ENCODE measurements at regions of chr1 and their contacts with region 1.

Region 1: DNA sequence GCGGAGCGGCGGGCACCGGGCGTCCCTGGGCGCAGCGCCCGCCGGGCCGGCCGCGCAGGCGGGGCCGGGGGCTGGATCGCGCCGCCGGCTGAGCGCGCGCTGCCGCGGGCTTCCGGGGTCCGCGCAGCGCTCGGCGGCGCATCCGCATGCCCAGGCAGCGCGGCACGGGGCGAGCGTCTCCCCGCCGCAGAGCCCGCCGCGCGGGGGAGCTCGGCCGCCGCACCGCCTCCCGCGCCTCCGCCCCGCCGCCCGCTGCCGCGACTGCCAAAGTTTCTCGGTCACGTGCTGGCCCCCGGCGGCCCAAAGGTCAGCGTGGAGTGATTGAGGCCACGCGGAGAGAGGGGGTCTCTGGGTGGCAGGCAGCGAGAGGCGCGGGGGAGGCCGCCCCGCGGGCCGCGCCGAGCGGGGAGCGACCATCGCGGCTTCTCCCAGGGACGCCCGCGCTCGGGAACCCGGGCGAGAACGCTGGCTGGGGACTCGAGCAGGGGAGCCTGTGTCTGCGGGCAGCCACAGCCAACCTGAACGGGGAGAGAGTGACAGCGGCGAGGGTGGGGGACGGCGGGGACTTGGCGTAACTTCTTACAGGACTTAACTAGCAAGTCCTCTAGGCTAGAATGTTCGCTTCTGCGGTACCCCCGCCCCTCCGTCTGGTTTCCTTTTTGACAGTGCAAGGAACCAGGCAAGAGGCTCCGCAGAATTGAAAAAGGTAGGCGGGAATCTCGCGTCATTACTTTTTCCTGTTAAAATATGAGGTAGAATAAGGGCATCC is at the start of gene ILDR2:
- DNase-seq: peak; percentile 32 to 55
- ATAC-seq: peak; percentile 57 to 92 (median 82)
- H3K4me3 ChIP-seq: peak within 1 kb of the TSS; percentile 42 to 78 (median 70)
- H3K27ac ChIP-seq: peak within 1 kb of the TSS in 9 of 10 donors; percentile 8 to 85 (median 67)
- H3K4me1 ChIP-seq: peaks cover 0 to 19% (median 9%) of the 10 kb centered on the region in 9 donors
- H3K27me3 ChIP-seq: peaks cover 0 to 69% (median 36%) of the 10 kb centered on the region in 7 donors
- CTCF ChIP-seq: peak in 1 of 9 donors; percentile 34
- total RNA-seq, gene ILDR2: 3.1 to 12.6 (median 5.1) TPM

Region 2: DNA sequence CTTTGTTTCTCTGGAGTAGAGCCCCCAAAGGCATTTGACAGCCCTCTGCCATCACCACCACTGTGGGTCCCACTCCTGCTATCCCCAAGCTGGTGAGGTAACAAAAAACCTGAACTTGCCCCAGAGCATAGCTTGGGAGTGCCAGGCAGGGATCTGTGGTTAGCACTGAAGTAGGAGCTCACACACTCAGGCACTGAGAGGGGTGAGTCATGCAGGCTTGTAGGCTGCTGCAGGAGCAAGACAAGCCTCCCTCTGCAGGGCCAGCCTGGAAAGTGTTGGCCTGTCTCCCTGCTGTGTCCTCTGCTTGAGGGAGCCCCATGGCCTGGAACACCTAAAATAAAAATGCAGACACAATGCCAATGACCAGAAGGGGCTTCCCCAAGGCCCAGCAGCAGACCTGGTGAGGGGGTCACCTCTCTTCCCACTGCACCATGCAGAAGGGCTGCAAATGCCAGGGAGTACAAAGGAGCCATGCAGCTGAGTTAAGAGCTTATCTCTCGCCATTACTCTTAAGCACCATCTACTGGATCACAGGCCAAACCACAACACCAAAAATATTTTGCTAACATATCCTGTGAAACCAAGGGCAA is 245.2 kb before region 1 on chr1:
- intact Hi-C with region 1: no loop called
- DNase-seq: no peak
- ATAC-seq: no peak
- H3K4me3 ChIP-seq: no peak overlapping the region
- H3K27ac ChIP-seq: no peak overlapping the region
- H3K4me1 ChIP-seq: no peaks in the 10 kb centered on the region
- H3K27me3 ChIP-seq: no peaks in the 10 kb centered on the region
- CTCF ChIP-seq: no peak

Region 3: GRCh38 chr1:166910396-166910994 is 65.0 kb before region 1 on chr1:
- intact Hi-C with region 1: loop called in 1 of 10 experiments (anchors 10 kb)
- DNase-seq: peak in 1 of 2 donors; percentile 60
- ATAC-seq: peak; percentile 80 to 95 (median 88)
- H3K4me3 ChIP-seq: no peak overlapping the region
- H3K27ac ChIP-seq: no peak overlapping the region
- H3K4me1 ChIP-seq: peaks cover 0 to 4% (median 0%) of the 10 kb centered on the region in 9 donors
- H3K27me3 ChIP-seq: no peaks in the 10 kb centered on the region
- CTCF ChIP-seq: peak; percentile 28 to 81 (median 76)

Region 4: DNA sequence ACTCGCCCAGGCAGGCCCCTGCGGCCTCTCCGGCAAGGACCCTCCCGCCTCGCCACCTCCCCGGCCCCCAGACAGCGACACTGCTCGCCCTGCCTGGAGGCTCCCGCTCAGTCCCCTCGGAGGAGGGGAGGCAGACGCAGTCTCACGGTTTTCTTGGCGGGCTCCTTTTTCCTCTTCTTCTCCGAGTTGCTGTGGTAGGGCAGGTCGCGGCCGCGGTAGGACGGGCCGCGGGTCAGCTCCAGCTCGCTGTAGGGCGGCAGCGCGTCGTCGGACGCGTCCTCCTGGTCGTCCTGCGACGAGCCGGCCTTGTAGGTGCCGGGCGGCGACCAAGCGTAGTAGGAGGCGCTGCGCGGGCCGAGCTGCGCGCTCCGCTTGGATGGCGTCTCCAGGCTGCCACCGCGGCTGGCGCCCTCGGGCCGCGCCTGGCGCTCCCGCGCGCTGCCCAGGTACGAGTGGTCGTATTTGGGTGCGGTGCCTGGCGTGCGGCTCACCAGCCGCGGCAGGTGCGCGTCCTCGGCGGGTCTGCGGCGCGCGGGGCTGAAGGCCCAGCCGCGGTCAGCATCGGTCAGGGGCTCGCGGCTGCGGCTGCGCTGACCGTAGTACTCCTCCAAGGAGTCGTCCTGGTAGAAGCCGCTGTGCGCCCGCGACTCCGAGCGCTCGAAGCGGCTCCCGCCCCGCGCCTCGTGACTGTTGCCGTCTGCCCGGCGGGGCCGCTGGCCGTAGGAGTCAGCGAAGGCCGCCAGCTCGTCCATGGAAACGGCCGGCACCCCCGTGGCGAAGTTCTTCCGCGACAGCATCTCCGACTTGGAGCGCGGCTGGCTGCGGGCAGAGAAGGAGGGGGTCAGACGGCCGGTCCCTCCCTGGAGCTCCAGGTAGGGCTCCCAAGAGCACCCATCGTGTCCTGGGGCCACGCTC is 54.7 kb before region 1 on chr1:
- intact Hi-C with region 1: loop called in 2 of 10 experiments (anchors 5 to 10 kb)
- DNase-seq: peak in 1 of 2 donors; percentile 26
- ATAC-seq: peak; percentile 28 to 76 (median 51)
- H3K4me3 ChIP-seq: peak overlapping the region; percentile 5 to 56 (median 46)
- H3K27ac ChIP-seq: peak overlapping the region in 5 of 10 donors; percentile 40 to 68 (median 43)
- H3K4me1 ChIP-seq: peaks cover 0 to 24% (median 7%) of the 10 kb centered on the region in 9 donors
- H3K27me3 ChIP-seq: peaks cover 0 to 54% (median 29%) of the 10 kb centered on the region in 7 donors
- CTCF ChIP-seq: peak in 1 of 9 donors; percentile 14